K562 (cell line): ENCODE measurements at regions of chr10 and their contacts with region 1.

Region 1: GRCh38 chr10:125048101-125048864 is 106.4 kb downstream of the ZRANB1 start:
- DNase-seq: peak; percentile 78 to 90 (median 82)
- ATAC-seq: peak; percentile 88
- H3K4me3 ChIP-seq: no peak overlapping the region
- H3K27ac ChIP-seq: peak overlapping the region; percentile 20; the same call in 1 of the 3 replicates
- H3K4me1 ChIP-seq: peaks cover 41 to 60% of the 10 kb centered on the region in 2 experiments; a peak in 4 of 5 replicates
- H3K27me3 ChIP-seq: no peaks in the 10 kb centered on the region
- CTCF ChIP-seq: peak; percentile 86 to 93 (median 91)
- EP300 ChIP-seq: no peak
- POLR2A ChIP-seq: no peak
- RAD21 ChIP-seq: peak; percentile 73 to 86

Region 2: GRCh38 chr10:123847682-123848432 is 1200.4 kb before region 1 on chr10:
- CTCF ChIA-PET with region 1: no interaction called
- POLR2A ChIA-PET with region 1: no interaction called
- in situ Hi-C with region 1: no loop called
- intact Hi-C with region 1: no loop called
- DNase-seq: no peak
- ATAC-seq: no peak
- H3K4me3 ChIP-seq: no peak overlapping the region
- H3K27ac ChIP-seq: no peak overlapping the region
- H3K4me1 ChIP-seq: no peaks in the 10 kb centered on the region
- H3K27me3 ChIP-seq: no peaks in the 10 kb centered on the region
- CTCF ChIP-seq: no peak
- EP300 ChIP-seq: no peak
- POLR2A ChIP-seq: no peak
- RAD21 ChIP-seq: no peak

Region 3: DNA sequence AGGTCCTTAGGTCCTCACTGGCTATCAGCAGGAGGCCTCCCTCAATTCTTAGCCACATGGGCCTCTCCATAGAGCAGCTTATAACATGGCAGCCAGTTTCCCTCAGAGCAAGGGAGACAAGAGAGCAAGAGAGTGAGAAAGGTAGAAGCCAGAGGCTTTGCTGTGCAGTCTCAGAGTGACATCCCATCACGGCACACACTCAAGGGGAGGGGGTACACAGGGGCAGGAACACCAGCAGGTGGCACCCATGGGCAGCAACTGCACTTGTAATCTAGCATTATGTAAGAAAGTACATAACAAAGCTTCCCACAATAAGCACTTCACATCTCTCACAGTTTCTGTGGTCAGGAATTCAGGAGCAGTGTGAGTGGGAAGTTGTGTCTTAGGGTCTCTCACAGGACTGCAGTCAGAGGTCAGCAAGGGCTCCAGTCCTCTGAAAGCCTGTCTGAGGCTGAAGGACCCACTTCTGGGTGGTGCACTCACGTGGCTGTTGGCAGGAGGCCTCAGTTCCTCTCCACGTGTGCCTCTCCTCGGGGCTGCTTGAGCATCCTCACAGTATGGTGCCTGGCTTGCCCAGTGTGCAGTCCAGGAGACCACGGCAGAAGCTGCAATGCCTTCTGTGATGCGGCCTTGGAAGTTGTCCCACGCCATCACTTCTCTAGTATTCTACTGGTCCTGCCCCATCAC is 789.0 kb before region 1 on chr10:
- CTCF ChIA-PET with region 1: no interaction called
- POLR2A ChIA-PET with region 1: no interaction called
- in situ Hi-C with region 1: loop called (anchors 25 kb)
- intact Hi-C with region 1: no loop called
- DNase-seq: no peak
- ATAC-seq: no peak
- H3K4me3 ChIP-seq: no peak overlapping the region
- H3K27ac ChIP-seq: no peak overlapping the region
- H3K4me1 ChIP-seq: no peaks in the 10 kb centered on the region
- H3K27me3 ChIP-seq: peaks cover 0 to 6% of the 10 kb centered on the region in 2 experiments; a peak in 1 of 5 replicates
- CTCF ChIP-seq: peak in 1 of 3 experiments; percentile 16; a peak in 1 of 6 replicates
- EP300 ChIP-seq: no peak
- POLR2A ChIP-seq: no peak
- RAD21 ChIP-seq: peak in 1 of 2 experiments; percentile 32; a peak in 1 of 4 replicates

Region 4: DNA sequence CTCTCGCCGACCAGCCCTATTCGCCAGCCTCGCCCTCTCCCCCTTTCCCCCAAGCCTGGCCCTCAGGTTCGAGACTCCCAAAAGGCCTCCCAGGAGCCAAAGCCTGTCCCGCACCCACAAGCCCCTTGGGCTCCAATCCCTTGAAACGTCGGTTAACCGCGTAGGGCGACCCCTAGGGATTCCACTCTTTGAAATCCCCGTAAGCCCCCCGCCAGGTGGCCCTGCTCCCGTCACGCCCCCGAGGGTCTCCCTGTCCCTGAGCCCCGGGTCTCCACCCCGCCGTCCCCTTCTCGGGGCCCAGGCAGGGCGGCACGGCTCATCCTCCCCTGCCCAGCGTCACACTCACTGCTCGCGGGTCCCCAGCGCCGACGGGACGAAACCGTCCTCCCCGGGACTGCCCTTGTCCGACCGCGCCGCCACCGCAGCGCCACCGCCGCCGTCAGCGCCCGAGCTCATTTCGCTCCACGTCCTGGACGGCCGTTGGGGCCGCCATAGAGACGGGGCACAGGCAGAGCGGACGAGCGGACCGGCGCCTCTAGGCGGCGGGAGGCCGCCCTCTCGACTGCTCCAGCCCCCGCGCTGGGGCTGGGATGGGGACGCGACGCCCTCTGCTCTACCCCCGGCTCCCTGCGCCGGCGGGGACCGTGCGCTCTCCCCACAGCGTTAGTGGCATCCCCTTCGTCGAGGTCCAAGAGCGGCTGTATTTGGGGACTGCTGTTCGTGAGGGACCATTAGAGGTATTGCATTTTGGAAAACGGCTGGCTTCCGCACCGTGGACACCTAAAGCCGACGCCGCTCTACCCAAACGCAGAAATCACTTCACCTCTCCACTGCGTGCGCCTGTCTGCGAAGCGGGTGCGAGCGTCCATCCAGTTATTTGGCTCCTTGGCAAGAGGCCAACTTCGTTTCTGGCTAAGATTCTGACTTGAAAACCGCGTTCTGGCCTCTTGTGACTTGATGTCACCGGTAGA is 256.6 kb before region 1 on chr10 and contains the start of gene EEF1AKMT2:
- CTCF ChIA-PET with region 1: no interaction called
- POLR2A ChIA-PET with region 1: interaction called, 3 read pairs
- in situ Hi-C with region 1: no loop called
- intact Hi-C with region 1: loop called (anchors 10 kb)
- DNase-seq: peak; percentile 85 to 91 (median 88)
- ATAC-seq: peak; percentile 92
- H3K4me3 ChIP-seq: peak within 1 kb of the TSS; percentile 60
- H3K27ac ChIP-seq: peak within 1 kb of the TSS; percentile 86
- H3K4me1 ChIP-seq: peaks cover 2 to 10% of the 10 kb centered on the region in 2 experiments; a peak in 3 of 5 replicates
- H3K27me3 ChIP-seq: no peaks in the 10 kb centered on the region
- CTCF ChIP-seq: peak in 2 of 3 experiments; percentile 18; a peak in 3 of 6 replicates
- EP300 ChIP-seq: peak; percentile 59
- POLR2A ChIP-seq: peak; percentile 91
- RAD21 ChIP-seq: no peak
- polyA plus RNA-seq, gene EEF1AKMT2: 9.3 to 9.8 TPM

Region 5: GRCh38 chr10:124943301-124944092 is 104.8 kb before region 1 on chr10:
- CTCF ChIA-PET with region 1: no interaction called
- POLR2A ChIA-PET with region 1: interaction called, 4 read pairs
- in situ Hi-C with region 1: loop called (anchors 5 kb)
- intact Hi-C with region 1: no loop called
- DNase-seq: peak in 2 of 4 experiments; percentile 0
- ATAC-seq: no peak
- H3K4me3 ChIP-seq: no peak overlapping the region
- H3K27ac ChIP-seq: no peak overlapping the region
- H3K4me1 ChIP-seq: peaks cover 3 to 12% of the 10 kb centered on the region in 2 experiments; a peak in 3 of 5 replicates
- H3K27me3 ChIP-seq: no peaks in the 10 kb centered on the region
- CTCF ChIP-seq: no peak
- EP300 ChIP-seq: no peak
- POLR2A ChIP-seq: no peak
- RAD21 ChIP-seq: no peak

Region 6: GRCh38 chr10:125343118-125343925 is 295.0 kb after region 1 on chr10:
- CTCF ChIA-PET with region 1: no interaction called
- POLR2A ChIA-PET with region 1: no interaction called
- in situ Hi-C with region 1: no loop called
- intact Hi-C with region 1: loop called (anchors 10 kb)
- DNase-seq: peak in 3 of 4 experiments; percentile 9 to 18 (median 15)
- ATAC-seq: peak; percentile 73
- H3K4me3 ChIP-seq: no peak overlapping the region
- H3K27ac ChIP-seq: no peak overlapping the region
- H3K4me1 ChIP-seq: no peaks in the 10 kb centered on the region
- H3K27me3 ChIP-seq: peaks cover 0 to 6% of the 10 kb centered on the region in 2 experiments; a peak in 3 of 5 replicates
- CTCF ChIP-seq: peak; percentile 45 to 50 (median 45); a peak in 4 of 6 replicates
- EP300 ChIP-seq: no peak
- POLR2A ChIP-seq: no peak
- RAD21 ChIP-seq: peak; percentile 19 to 58; a peak in 2 of 4 replicates

Region 7: DNA sequence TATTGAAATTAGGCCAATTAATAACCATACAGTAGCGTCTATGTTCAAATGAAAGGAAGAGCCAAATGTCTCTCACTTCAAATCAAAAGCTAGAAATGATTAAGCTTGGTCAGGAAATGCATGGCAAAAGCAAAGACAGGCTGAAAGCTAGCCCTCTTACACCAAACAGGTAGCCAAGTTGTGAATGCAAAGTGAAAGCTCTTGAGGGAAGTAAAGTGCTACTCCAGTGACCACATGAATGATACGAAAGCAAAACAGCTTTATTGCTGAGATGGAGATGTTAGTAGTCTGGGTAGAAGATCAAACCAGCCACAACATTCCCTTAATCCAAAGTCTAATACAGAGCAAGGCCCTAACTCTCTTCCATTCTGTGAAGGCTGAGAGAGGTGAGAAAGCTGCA is 510.9 kb after region 1 on chr10:
- CTCF ChIA-PET with region 1: no interaction called
- POLR2A ChIA-PET with region 1: no interaction called
- in situ Hi-C with region 1: no loop called
- intact Hi-C with region 1: no loop called
- DNase-seq: no peak
- ATAC-seq: no peak
- H3K4me3 ChIP-seq: no peak overlapping the region
- H3K27ac ChIP-seq: no peak overlapping the region
- H3K4me1 ChIP-seq: no peaks in the 10 kb centered on the region
- H3K27me3 ChIP-seq: peaks cover 0 to 9% of the 10 kb centered on the region in 2 experiments; a peak in 2 of 5 replicates
- CTCF ChIP-seq: no peak
- EP300 ChIP-seq: no peak
- POLR2A ChIP-seq: no peak
- RAD21 ChIP-seq: no peak